Activated CD8-positive, alpha-beta T cell treated with anti-CD3 and anti-CD28 coated beads, Interleukin-2, amount 10 ng/mL, durations not matched to agents 7 days and 5 days (primary cell): ENCODE measurements at regions of chr14 and their contacts with region 1.

Region 1: DNA sequence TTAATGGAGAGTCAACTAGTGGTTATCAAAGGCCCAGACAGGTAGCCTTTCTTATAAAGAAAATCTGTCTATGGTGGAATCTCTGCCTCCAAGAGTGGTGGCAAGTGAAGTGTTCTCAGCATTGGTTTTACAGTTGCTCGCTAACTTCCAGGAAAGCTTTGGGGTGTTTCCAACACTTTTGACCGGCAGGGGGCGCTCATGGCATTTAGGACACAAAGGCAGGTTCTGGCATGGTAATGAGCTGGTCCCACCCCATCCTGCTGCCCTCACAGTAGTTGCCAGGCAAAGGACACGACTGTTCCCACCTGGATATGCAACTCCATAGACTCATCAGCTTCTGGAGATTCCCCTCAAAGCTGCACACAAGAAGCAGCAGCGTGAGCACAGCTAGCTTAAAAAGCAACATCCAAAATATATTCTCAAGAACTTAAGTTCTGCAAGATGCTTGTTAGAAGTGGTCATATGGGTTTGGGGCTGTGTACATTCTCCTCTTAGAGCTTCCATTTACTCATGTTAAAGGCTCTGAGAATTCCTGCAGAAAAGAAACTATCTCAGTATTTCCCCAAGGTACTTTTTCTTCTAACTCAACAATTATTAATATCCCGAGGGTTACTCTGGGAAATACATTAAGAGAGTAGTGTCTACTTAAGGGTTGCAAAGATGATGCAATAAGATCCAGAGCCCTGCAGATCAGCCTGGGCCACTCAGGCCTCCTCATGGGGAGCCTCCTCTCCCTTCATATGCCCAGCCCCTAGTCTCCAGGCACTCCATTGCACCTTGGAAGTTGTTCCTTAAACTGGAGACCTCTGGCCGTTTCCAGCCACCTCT is 14.8 kb downstream of the PROX2 start:
- DNase-seq: peak; percentile 94
- ATAC-seq: peak; percentile 87
- H3K4me3 Mint-ChIP-seq: no peak overlapping the region
- H3K27ac Mint-ChIP-seq: no peak overlapping the region
- H3K4me1 Mint-ChIP-seq: peaks cover 11% of the 10 kb centered on the region
- H3K27me3 Mint-ChIP-seq: no peaks in the 10 kb centered on the region

Region 2: DNA sequence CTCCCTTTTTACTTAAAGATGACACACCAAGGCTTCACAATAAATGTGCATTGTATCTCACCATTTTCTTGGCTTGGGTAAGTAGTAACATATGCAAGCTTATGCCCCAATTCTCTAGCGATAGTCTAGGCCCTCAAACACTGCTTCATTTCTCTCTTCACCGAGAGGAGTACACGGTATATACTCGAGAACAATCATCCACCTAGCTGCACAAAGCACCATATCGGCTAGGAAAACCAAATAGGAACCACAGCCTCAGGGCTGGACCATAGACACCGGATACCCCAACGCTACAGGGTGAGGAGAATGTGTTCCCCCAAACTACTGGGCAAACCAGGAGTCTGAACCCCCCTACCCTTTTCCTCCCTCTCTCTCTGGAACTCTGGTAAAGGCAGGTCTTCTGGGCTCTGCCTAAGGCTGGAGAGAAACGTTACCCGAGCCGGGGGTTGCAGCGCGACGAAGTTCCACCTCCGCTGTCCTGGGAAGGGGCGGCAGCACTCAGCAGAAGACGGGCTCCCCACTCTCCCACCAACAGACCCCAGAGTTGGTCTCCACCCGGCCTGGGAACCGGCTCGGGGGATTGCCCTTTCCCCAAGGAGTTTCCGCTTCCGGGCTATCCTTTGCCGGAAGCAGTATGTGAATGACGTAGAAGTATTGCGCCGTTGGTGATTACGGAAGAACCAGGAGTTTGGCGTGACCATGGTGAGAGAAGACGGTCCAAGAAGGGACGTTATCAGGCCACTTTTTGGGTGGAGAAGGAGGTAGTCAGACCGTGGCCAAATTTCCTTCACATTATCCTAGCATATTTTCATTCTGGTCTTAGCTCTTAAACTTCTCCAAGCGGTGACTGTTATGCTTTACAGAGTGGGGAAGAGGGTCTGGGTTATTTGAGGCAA is 148.4 kb before region 1 on chr14 and contains the starts of genes AREL1 and FCF1:
- CTCF ChIA-PET with region 1: no interaction called
- POLR2A ChIA-PET with region 1: no interaction called
- DNase-seq: peak; percentile 90
- ATAC-seq: peak; percentile 94
- H3K4me3 Mint-ChIP-seq: peak within 1 kb of the TSS; percentile 90
- H3K27ac Mint-ChIP-seq: peak within 1 kb of the TSS; percentile 93
- H3K4me1 Mint-ChIP-seq: peaks cover 42% of the 10 kb centered on the region
- H3K27me3 Mint-ChIP-seq: no peaks in the 10 kb centered on the region
- total RNA-seq, gene AREL1: 44.1 to 44.9 TPM
- total RNA-seq, gene FCF1: 64.1 to 64.2 TPM

Region 3: DNA sequence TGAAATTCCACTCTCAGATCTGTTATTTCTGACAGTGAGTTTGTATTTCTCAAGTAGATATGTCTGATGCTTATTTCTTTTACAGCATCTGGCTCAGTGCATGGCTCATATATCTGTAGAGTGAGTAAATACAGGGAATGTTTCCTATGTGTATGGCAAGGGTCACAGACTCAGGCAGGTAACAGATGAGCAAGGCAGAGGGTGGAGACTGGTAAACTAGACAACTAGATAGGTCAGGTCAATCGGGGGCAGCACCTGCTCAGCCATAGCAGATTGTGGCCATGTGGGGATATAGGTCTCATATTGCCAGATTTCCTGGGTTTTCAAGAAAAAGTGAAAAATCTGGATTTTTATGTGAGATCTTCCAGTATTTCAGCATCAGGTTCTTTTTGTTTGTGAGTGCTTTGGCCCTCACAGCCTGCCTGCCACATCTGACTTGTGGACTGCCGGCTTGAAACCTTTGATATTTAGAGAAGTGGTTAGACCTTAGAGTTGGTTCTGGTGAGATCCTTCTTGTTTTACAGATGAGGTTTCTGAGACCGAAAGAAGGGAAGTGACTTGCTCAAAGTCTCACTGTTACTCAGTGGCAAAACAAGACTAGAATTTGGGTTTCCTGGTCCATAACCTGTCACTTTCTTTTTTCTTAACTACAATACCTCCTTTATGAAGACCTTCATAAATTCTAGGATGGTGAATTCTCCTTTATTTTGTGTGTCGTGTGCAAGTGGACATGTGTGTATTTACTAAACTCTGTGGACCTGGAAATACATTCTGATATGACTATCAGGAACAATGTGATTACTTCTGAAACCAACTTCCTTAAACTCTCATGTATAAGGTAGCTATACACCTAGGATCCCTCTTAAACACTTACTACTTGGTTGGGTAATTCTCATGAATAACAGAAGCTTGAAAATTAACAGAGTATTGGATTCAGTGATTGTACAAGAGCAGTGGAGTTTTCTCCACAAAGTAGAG is 19.6 kb before region 1 on chr14:
- CTCF ChIA-PET with region 1: interaction called, 87 read pairs
- POLR2A ChIA-PET with region 1: no interaction called
- DNase-seq: peak; percentile 64
- ATAC-seq: peak; percentile 84
- H3K4me3 Mint-ChIP-seq: peak overlapping the region; percentile 32
- H3K27ac Mint-ChIP-seq: peak overlapping the region; percentile 85
- H3K4me1 Mint-ChIP-seq: peaks cover 60% of the 10 kb centered on the region
- H3K27me3 Mint-ChIP-seq: no peaks in the 10 kb centered on the region

Region 4: DNA sequence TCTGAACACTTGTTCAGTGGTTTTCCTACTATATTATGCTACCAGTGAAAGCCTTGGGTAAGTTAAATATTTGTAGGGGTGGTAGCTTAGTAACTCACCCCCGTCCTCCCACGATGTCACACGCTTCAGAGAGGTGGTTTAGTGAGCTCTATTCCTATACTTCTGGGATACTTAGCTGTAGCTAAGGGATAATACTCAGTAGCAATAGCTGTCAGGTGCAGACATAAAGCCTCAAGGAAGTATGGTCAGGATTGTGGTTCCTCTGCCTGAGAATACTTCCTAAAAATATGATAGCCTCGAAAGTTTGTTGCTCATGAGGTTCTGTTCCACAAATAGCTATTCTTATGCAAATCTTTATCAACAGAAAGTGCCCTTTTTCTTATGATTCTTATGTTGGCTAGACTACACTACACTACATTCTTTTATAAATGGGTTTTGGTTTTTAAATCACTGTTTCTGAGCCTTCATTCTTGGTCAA is 32.5 kb after region 1 on chr14:
- CTCF ChIA-PET with region 1: interaction called, 87 read pairs
- POLR2A ChIA-PET with region 1: no interaction called
- DNase-seq: no peak
- ATAC-seq: no peak
- H3K4me3 Mint-ChIP-seq: no peak overlapping the region
- H3K27ac Mint-ChIP-seq: no peak overlapping the region
- H3K4me1 Mint-ChIP-seq: peaks cover 17% of the 10 kb centered on the region
- H3K27me3 Mint-ChIP-seq: no peaks in the 10 kb centered on the region

Region 5: DNA sequence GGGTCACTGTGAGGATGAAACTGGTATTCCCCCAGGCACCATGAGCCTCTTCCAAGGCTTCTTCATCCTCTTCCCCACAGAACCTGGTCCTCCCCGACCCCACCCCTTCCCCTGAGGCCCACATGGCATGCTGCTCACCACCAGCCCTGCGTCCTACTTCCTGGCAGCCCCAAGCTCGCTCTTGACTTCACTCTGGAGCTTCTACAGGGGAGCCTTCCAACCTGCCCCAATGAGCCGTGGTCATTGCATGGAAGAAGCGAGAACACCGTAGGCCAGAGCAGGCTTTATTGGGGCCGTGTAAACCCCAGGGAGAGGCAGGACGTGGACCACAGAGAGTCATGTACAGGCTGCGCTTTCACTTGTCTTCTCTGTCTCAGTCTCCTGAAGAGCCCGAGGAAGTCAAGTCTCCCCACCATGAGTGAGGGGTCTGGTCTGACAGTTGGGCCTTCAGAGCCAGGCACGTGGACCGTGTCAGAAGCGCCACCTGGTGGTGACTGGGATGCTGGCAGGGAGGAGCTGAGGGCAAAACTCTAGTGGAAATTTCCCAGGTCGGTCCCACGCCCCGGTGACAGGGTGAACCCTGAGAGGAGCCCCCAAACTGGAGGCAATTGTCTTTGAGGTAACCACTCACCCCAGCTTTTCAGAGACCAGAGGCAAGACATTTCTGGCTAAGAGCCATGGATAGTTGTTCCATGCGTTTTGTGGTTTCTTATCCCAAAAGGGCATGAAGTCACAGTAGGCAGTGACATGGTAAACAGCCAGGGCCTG is 44.4 kb after region 1 on chr14:
- CTCF ChIA-PET with region 1: interaction called, 552 read pairs
- POLR2A ChIA-PET with region 1: interaction called, 17 read pairs
- DNase-seq: peak; percentile 81
- ATAC-seq: peak; percentile 65
- H3K4me3 Mint-ChIP-seq: no peak overlapping the region
- H3K27ac Mint-ChIP-seq: peak overlapping the region; percentile 50
- H3K4me1 Mint-ChIP-seq: peaks cover 12% of the 10 kb centered on the region
- H3K27me3 Mint-ChIP-seq: no peaks in the 10 kb centered on the region

Region 6: DNA sequence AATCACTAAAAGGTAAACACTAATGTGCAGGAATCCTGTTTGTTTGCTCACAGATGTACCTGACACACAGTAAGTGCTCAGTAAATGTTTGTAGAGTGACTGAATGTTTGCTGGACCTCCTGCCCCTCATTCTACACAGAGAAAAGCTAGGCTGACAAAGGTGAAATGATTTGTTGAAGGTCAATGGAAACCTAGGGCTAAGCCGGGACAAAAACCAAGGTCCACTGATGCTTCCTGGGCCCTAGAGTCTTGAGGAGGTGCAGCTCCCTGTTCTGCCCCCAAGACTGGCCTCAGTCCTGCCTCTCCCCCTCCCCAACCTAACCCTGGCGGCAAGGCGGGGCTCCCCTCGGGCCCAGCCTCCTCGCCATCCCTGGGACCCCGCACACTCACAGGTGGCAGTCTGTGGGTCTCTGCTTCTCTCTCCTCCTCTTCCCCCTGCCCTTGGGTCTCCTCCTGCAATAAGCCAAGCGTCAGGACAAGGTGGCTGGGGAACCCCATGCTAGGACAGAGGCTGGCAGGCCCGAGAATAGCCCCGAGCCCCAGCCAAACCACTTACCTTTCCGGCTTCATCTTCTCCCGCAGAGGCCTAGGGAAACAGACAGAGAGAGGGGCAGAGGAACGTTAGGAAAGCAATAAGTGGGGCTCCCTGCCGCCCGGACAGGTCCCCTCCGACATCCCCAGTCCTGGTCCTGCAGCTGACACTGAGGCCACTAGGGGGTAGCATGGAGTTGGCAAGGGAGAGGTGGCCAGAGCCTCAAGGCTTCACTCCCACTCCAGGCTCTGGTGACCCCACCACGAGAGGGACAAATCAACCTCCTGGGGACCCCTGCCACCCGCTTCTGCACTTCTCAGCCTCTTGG is 84.9 kb after region 1 on chr14:
- CTCF ChIA-PET with region 1: interaction called, 23 read pairs
- POLR2A ChIA-PET with region 1: no interaction called
- DNase-seq: peak; percentile 86
- ATAC-seq: peak; percentile 75
- H3K4me3 Mint-ChIP-seq: no peak overlapping the region
- H3K27ac Mint-ChIP-seq: peak overlapping the region; percentile 68
- H3K4me1 Mint-ChIP-seq: peaks cover 31% of the 10 kb centered on the region
- H3K27me3 Mint-ChIP-seq: no peaks in the 10 kb centered on the region

Region 7: GRCh38 chr14:74963705-74964271 is 102.7 kb after region 1 on chr14:
- CTCF ChIA-PET with region 1: interaction called, 13 read pairs
- POLR2A ChIA-PET with region 1: no interaction called
- DNase-seq: no peak
- ATAC-seq: peak; percentile 36
- H3K4me3 Mint-ChIP-seq: no peak overlapping the region
- H3K27ac Mint-ChIP-seq: no peak overlapping the region
- H3K4me1 Mint-ChIP-seq: peaks cover 20% of the 10 kb centered on the region
- H3K27me3 Mint-ChIP-seq: peaks cover 16% of the 10 kb centered on the region